HCT116 (cell line): ENCODE measurements at regions of chr6 and their contacts with region 1.

Region 1: GRCh38 chr6:32952817-32953739 is at the start of gene HLA-DMA:
- DNase-seq: peak; percentile 81
- ATAC-seq: peak; percentile 95
- H3K4me3 ChIP-seq: no peak within 1 kb of the TSS
- H3K27ac ChIP-seq: no peak within 1 kb of the TSS
- H3K4me1 ChIP-seq: peaks cover 0 to 17% of the 10 kb centered on the region in 2 experiments; a peak in 2 of 4 replicates
- H3K27me3 ChIP-seq: no peaks in the 10 kb centered on the region
- CTCF ChIP-seq: peak; percentile 21 to 69 (median 68); a peak in 5 of 6 replicates
- POLR2A ChIP-seq: no peak
- RAD21 ChIP-seq: peak; percentile 35
- total RNA-seq, gene HLA-DMA: 12.1 TPM

Region 2: DNA sequence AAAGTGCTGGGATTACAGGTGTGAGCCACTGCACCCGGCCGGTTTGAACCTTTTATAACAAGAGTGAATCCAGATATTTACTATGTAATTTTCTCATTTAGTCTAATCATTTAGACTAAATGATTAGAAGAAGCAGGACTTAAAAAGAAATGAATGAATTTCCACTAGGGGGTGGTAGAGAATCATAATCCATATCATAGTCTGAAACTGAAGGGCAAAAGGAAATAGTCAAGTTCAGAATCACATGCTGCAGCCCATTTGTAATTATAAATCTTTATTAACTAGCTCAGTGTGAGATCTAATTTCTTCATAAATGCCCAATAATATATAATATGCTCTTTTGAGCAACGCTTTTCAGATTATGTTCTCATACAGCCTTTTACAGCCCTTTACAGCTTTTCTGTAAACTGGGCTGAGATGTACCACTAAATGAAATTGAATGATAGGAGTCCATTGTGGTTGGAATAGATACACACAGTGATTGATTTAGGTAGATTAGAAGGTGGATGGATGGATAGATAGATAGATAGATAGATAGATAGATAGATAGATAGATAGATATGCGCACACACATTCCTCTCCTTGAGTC is 67.3 kb before region 1 on chr6:
- CTCF ChIA-PET with region 1: interaction called, 13 read pairs
- POLR2A ChIA-PET with region 1: no interaction called
- RAD21 ChIA-PET with region 1: interaction called in 1 of 2 experiments, 4 read pairs
- intact Hi-C with region 1: no loop called
- DNase-seq: peak; percentile 72
- ATAC-seq: peak; percentile 80
- H3K4me3 ChIP-seq: no peak overlapping the region
- H3K27ac ChIP-seq: no peak overlapping the region
- H3K4me1 ChIP-seq: peaks cover 0 to 7% of the 10 kb centered on the region in 2 experiments; a peak in 2 of 4 replicates
- H3K27me3 ChIP-seq: no peaks in the 10 kb centered on the region
- CTCF ChIP-seq: peak; percentile 33 to 80 (median 64)
- POLR2A ChIP-seq: no peak
- RAD21 ChIP-seq: peak; percentile 86

Region 3: DNA sequence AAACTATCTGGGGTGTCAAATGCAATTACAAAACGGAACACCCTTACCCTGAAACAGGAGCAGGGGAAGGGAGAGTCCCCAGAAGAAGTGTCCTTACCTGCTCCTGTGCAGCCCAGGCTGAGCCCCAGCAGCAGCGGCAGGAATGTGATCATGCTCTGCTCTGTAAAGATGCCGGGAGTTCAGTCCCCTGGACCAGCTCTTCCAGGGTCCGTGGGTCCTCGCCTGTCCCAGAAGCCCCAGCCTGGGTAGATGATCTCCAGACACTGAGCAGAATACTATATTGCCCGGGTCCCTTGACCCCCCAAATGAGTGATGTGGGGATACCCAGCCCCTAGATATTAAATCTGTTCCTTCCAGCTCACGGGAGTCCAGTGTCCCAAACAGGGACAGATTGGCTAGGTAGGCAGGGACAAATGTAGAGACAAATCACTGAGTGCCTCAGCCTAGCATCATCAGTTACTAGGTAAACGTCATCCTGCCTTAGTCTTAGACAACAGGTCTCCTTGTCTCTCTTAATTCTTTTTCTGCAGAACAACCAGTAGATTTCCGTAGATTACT is 12.3 kb before region 1 on chr6 and contains the start of gene HLA-DMB:
- CTCF ChIA-PET with region 1: interaction called, 13 read pairs
- POLR2A ChIA-PET with region 1: interaction called, 4 read pairs
- RAD21 ChIA-PET with region 1: no interaction called
- intact Hi-C with region 1: no loop called
- DNase-seq: peak; percentile 75
- ATAC-seq: peak; percentile 100
- H3K4me3 ChIP-seq: peak within 1 kb of the TSS; percentile 30 to 41
- H3K27ac ChIP-seq: no peak within 1 kb of the TSS
- H3K4me1 ChIP-seq: peaks cover 4 to 12% of the 10 kb centered on the region in 2 experiments; a peak in 2 of 4 replicates
- H3K27me3 ChIP-seq: no peaks in the 10 kb centered on the region
- CTCF ChIP-seq: no peak
- POLR2A ChIP-seq: no peak
- RAD21 ChIP-seq: no peak
- total RNA-seq, gene HLA-DMB: 3.3 TPM

Region 4: GRCh38 chr6:32984605-32985389 is 31.7 kb after region 1 on chr6:
- CTCF ChIA-PET with region 1: interaction called, 40 read pairs
- POLR2A ChIA-PET with region 1: no interaction called
- RAD21 ChIA-PET with region 1: no interaction called
- intact Hi-C with region 1: no loop called
- DNase-seq: peak; percentile 77
- ATAC-seq: peak; percentile 81
- H3K4me3 ChIP-seq: no peak overlapping the region
- H3K27ac ChIP-seq: no peak overlapping the region
- H3K4me1 ChIP-seq: no peaks in the 10 kb centered on the region
- H3K27me3 ChIP-seq: no peaks in the 10 kb centered on the region
- CTCF ChIP-seq: peak; percentile 84 to 95 (median 90)
- POLR2A ChIP-seq: no peak
- RAD21 ChIP-seq: peak; percentile 98

Region 5: DNA sequence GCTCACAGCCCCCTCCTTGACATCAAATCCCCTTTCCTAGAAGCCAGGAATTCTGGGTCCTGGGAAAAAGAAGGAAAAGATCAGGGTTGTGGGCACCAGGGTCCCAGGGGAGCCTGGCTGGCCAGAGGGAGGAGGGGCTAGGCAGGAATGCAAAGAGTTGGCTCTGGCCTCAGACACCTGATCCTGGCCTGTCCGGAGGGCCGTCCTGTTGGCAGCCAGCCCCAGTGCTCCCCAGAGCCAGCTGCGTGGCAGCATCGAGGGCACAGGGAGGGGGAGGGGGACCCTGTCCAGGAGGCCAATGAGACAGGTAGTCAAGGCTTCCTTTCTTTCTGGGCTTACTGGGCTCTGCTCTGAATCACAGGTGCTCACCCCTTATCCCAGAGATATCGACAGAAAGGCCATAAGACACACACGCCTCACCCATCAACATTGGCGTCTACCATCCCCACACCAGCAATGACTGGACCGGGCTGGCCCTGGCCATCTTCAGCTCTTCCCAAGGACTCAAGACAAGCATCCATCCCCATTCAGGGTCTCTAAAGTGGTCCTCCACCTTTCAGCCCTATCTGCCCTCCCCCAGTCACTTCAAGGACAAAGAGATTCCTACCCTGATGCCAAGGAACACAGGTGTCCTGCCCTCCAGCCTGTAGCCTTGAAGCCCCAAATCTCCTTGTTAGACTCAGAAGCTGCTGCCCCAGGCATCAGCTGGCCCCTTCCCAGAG is 238.5 kb after region 1 on chr6:
- CTCF ChIA-PET with region 1: no interaction called
- POLR2A ChIA-PET with region 1: no interaction called
- RAD21 ChIA-PET with region 1: no interaction called
- intact Hi-C with region 1: no loop called
- DNase-seq: no peak
- ATAC-seq: no peak
- H3K4me3 ChIP-seq: no peak overlapping the region
- H3K27ac ChIP-seq: no peak overlapping the region
- H3K4me1 ChIP-seq: no peaks in the 10 kb centered on the region
- H3K27me3 ChIP-seq: no peaks in the 10 kb centered on the region
- CTCF ChIP-seq: no peak
- POLR2A ChIP-seq: no peak
- RAD21 ChIP-seq: no peak